ENCODE measurements at regions of chr15 and their contacts with region 1.

Region 1: DNA sequence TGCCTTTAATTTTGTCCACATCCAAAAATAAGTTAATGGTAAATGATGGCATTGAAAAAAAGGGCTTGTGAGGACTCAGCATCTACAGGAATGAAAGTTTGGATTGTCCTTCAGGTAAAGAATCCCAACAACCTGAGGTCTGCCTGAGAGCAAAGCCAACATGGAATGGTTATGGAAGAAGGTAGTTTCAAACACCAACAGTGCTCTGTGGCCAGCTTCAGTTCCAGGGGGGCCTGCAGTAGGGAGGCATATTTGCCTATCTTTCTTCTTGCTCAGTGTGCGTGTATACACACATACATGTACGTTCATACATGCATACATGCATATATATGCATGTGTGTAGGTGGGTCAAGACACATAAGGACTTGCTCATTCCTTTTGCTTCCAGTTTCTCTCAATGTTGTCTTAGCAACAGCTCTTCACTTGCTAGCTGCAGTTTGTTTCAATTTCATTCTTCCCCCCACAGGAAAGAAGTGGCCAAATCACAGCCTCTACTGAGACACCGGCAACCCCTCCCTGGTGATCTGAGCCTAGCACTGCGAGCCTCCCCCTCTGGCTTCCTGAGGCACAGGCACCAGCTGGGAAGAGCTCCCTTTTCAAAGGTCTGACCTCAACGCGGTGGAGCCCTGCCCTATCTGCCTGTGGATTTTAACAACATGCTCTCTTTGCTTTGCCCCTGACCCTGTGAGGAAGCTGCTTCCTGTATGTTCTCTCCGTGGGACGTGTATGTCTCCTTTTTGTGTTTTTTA is 146.2 kb downstream of the KLF13 start:
- DNase-seq: peak; percentile 79
- ATAC-seq: peak; percentile 94
- H3K4me3 ChIP-seq: peak overlapping the region; percentile 50
- H3K27ac ChIP-seq: peak overlapping the region; percentile 92
- H3K4me1 ChIP-seq: peaks cover 37% of the 10 kb centered on the region
- H3K27me3 ChIP-seq: no peaks in the 10 kb centered on the region
- CTCF ChIP-seq: 0 out of 6 replicates have a peak, but pooled peaks of 1 of the 3 experiments have one; percentile 2
- EP300 ChIP-seq: peak in 1 of 2 experiments; percentile 17; a peak in 1 of 4 replicates
- POLR2A ChIP-seq: peak; percentile 68
- RAD21 ChIP-seq: 0 out of 2 replicates have a peak, but pooled peaks have one; percentile 13

Region 2: DNA sequence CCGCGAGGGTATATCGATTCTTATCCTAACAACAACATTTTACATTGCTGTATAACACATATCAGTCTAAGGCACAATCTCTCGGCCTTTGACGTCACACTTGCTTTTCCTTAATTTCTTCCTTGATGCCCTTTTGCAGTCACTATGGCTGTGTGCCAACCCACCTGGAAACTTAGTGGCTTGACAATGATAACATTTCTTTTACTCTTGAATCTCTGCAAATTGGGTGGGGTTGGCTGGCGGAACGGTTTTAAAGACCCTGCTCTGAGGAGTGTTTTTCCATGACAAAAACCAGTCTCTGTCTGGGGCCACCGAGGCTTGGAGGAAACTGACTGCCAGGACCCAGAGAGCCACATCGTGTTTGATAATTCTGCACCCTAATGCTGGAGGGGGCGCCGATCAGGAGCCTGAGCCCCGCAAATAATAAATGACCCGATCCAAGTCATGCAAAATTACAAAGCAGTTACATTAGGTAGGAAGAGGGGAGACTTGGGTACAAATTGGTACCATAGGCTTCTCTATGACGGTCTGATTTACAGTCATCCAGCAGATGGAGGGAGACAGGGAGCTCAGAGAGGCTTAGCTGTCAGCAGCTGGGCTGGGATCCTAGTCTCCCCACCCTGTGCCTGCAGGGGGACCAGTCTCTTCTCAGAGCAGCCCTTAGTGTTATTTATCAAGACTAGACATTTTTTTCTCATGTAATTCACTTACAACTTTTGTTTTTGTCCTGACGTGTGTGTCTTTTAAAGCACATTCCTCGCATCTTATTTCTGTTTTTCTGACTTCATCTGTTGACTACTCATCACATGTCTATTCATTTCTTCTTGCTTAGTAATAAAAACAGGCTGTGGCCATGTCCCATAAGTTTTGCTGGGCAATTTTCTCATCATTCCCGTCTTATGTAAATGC is 30.4 kb before region 1 on chr15:
- CTCF ChIA-PET with region 1: interaction called, 63 read pairs
- POLR2A ChIA-PET with region 1: interaction called, 8 read pairs
- RAD21 ChIA-PET with region 1: interaction called, 83 read pairs
- SMC1A ChIA-PET with region 1: interaction called, 13 read pairs
- in situ Hi-C with region 1: no loop called
- intact Hi-C with region 1: loop called (anchors 5 kb)
- DNase-seq: no peak
- ATAC-seq: 0 out of 3 replicates have a peak, but pooled peaks have one; percentile 26
- H3K4me3 ChIP-seq: no peak overlapping the region
- H3K27ac ChIP-seq: no peak overlapping the region
- H3K4me1 ChIP-seq: peaks cover 34% of the 10 kb centered on the region
- H3K27me3 ChIP-seq: no peaks in the 10 kb centered on the region
- CTCF ChIP-seq: peak in 2 of 3 experiments; percentile 5 to 26; a peak in 2 of 6 replicates
- EP300 ChIP-seq: no peak
- POLR2A ChIP-seq: no peak
- RAD21 ChIP-seq: no peak

Region 3: GRCh38 chr15:31458591-31459399 is 14.0 kb before region 1 on chr15:
- CTCF ChIA-PET with region 1: interaction called, 18 read pairs
- POLR2A ChIA-PET with region 1: interaction called, 15 read pairs
- RAD21 ChIA-PET with region 1: interaction called, 41 read pairs
- SMC1A ChIA-PET with region 1: interaction called, 39 read pairs
- in situ Hi-C with region 1: no loop called
- intact Hi-C with region 1: no loop called
- DNase-seq: peak; percentile 77
- ATAC-seq: peak; percentile 96
- H3K4me3 ChIP-seq: peak overlapping the region; percentile 4; the same call in 1 of the 2 replicates
- H3K27ac ChIP-seq: peak overlapping the region; percentile 24; the same call in 1 of the 2 replicates
- H3K4me1 ChIP-seq: peaks cover 22% of the 10 kb centered on the region
- H3K27me3 ChIP-seq: no peaks in the 10 kb centered on the region
- CTCF ChIP-seq: no peak
- EP300 ChIP-seq: peak; percentile 47 to 55; a peak in 2 of 4 replicates
- POLR2A ChIP-seq: no peak
- RAD21 ChIP-seq: no peak

Region 4: GRCh38 chr15:31498329-31498728 is 25.5 kb after region 1 on chr15:
- CTCF ChIA-PET with region 1: no interaction called
- POLR2A ChIA-PET with region 1: no interaction called
- RAD21 ChIA-PET with region 1: no interaction called
- SMC1A ChIA-PET with region 1: no interaction called
- in situ Hi-C with region 1: no loop called
- intact Hi-C with region 1: no loop called
- DNase-seq: no peak
- ATAC-seq: no peak
- H3K4me3 ChIP-seq: no peak overlapping the region
- H3K27ac ChIP-seq: no peak overlapping the region
- H3K4me1 ChIP-seq: peaks cover 4% of the 10 kb centered on the region
- H3K27me3 ChIP-seq: no peaks in the 10 kb centered on the region; a peak in 1 of 4 replicates
- CTCF ChIP-seq: no peak
- EP300 ChIP-seq: no peak
- POLR2A ChIP-seq: no peak
- RAD21 ChIP-seq: no peak

Measured in GM12878 (cell line).